Activated CD4-positive, alpha-beta T cell treated with anti-CD3 and anti-CD28 coated beads for 36 hours (primary cell): ENCODE measurements at regions of chr3 and their contacts with region 1.

Region 1: DNA sequence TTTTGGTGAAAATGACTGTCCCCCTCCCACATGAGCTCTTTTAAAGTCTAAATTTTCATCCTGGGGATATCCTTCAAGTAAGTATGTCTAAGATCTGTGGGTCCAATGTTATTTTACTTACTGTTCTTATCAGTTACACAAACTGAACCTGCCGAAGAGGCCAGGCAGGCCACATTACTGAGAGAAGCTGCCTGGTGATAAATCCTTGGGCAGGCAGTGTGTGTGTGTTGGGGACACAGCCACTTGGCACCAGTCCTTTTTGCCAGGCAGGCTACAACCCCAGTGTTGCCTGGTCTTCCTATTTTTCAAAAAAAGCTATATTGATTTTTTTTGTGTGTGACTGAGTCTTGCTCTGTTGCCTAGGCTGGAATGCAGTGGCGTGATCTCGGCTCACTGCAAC is 50.6 kb upstream of the RASA2 start:
- DNase-seq: no peak
- ATAC-seq: no peak
- H3K4me3 Mint-ChIP-seq: no peak overlapping the region
- H3K27ac Mint-ChIP-seq: no peak overlapping the region
- H3K4me1 Mint-ChIP-seq: peaks cover 26% of the 10 kb centered on the region
- H3K27me3 Mint-ChIP-seq: no peaks in the 10 kb centered on the region

Region 2: DNA sequence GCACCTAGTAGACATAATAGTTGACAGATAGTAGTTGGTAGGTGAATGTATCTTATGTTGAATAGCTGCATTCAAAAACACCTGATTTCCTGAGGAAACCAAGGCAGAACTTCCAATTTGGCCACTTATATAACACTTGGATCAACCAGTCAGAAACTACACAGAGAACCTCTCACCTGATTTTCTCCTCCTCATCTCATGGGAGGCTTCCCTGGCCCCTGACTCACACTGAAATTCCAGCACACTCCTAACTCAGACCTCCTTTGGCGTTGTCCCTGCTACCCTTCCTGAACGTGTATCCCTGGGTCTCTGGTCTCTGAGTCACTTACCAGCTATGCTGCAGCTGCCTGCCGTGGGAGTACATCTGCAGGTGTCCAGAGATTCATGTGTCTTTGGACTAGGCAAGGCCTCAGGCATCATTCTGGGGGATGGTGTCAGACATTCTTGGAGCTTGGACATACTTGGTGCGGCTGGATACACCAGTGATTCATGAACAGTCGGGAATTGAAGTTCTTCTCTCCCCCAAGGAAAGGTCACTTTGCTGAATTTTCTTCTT is 907.2 kb before region 1 on chr3:
- CTCF ChIA-PET with region 1: no interaction called
- POLR2A ChIA-PET with region 1: no interaction called
- intact Hi-C with region 1: no loop called
- DNase-seq: no peak
- ATAC-seq: no peak
- H3K4me3 Mint-ChIP-seq: no peak overlapping the region
- H3K27ac Mint-ChIP-seq: no peak overlapping the region
- H3K4me1 Mint-ChIP-seq: no peaks in the 10 kb centered on the region
- H3K27me3 Mint-ChIP-seq: peaks cover 10% of the 10 kb centered on the region

Region 3: GRCh38 chr3:141707741-141708203 is 271.6 kb after region 1 on chr3:
- CTCF ChIA-PET with region 1: no interaction called
- POLR2A ChIA-PET with region 1: interaction called, 10 read pairs
- intact Hi-C with region 1: no loop called
- DNase-seq: no peak
- ATAC-seq: no peak
- H3K4me3 Mint-ChIP-seq: no peak overlapping the region
- H3K27ac Mint-ChIP-seq: no peak overlapping the region
- H3K4me1 Mint-ChIP-seq: no peaks in the 10 kb centered on the region
- H3K27me3 Mint-ChIP-seq: no peaks in the 10 kb centered on the region